ENCODE measurements at regions of chr13 and their contacts with region 1.

Region 1: DNA sequence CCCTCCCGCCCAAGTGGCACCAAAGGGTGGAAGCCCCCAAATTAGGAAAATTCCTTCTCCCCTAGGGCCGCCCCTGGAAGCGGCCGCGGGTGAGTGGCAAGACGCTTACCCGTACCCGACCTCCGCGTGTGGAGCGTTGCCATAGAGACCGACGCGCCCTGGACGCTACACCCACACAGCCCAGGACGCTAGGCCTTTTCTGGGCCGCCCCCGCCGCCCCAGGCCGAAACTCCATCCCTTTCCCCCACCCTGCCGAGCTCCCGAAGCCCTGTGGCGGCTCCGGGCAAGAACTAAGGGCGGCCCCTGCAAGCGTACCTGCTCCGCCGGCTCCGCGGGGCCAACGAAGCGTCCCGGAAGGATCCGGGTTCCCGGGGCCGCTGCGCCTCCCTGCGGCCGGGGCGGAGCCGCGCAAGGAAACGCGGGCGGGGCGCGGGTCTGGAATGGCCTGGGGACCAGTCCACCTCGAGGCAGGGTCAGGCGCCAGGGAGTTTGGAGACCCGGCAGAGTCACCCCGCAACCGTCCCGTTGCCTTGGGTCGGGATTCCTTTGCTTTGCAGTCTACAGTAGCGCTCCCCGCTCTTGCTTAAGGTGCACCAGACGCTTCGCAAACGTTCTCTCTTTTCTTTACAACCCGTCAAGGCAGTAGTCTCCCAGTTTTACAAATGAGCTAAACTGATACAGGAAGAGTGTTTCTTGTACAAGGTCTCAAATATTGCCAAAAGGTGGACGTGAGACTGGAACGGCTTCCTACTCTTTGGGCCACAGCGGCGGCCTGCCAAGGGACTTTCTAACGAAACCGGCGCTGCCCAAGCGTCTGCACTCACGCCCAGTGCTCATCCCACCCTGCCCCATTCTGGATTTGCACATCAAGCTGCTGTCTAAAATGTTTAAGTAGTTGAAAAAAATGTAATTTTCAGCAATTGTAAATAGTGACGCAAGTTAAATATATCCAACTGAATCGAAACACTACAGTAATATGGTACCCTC is at the start of gene NEK5:
- DNase-seq: peak; percentile 14 to 83 (median 67)

Region 2: GRCh38 chr13:51380269-51380668 is 748.7 kb before region 1 on chr13:
- intact Hi-C with region 1: no loop called
- DNase-seq: no peak

Region 3: DNA sequence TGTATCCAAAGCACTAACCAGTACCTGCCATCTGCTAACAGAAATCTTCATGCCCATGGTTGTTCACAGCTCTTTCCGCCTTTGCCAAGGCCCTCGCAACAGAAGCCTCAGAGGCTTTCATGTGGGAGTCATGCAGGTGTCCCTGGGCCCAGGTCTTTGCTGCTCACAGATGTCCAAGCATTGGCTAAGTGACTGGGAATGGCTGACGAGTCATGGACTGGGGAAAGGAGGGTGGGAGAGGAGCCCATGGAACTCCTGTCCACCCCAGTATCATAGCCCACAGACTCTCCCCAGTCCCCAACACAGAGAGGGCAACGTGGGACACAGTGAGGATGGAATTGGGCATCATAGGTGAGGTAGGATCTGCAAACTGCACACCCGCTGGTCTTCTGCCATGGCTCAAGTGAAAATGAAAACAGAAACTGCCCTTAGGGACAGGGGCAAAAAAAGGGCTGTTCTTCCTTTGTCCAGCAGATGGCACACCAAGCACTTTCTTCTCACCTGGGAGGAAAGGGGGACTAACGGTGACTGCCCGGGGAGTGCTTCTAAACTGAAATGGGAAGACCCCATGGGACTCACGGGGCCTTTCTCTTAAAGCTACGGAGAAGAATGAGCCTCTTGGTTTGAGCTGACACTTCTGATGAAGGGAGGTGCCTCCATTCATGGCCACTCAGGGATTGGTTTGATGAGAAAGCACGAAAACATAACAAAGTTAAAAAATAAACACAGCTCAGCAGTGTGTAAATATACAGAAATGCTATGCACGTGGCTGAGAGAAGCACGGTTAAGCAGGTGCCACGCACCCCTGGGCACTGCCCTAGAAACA is 314.0 kb before region 1 on chr13:
- intact Hi-C with region 1: loop called (anchors 10 kb)
- DNase-seq: peak in 36 of 42 donors; percentile 9 to 86 (median 62)

Region 4: GRCh38 chr13:51995677-51996551 is 133.1 kb before region 1 on chr13:
- intact Hi-C with region 1: loop called (anchors 5 kb)
- DNase-seq: peak in 1 of 42 donors; percentile 14

Region 5: DNA sequence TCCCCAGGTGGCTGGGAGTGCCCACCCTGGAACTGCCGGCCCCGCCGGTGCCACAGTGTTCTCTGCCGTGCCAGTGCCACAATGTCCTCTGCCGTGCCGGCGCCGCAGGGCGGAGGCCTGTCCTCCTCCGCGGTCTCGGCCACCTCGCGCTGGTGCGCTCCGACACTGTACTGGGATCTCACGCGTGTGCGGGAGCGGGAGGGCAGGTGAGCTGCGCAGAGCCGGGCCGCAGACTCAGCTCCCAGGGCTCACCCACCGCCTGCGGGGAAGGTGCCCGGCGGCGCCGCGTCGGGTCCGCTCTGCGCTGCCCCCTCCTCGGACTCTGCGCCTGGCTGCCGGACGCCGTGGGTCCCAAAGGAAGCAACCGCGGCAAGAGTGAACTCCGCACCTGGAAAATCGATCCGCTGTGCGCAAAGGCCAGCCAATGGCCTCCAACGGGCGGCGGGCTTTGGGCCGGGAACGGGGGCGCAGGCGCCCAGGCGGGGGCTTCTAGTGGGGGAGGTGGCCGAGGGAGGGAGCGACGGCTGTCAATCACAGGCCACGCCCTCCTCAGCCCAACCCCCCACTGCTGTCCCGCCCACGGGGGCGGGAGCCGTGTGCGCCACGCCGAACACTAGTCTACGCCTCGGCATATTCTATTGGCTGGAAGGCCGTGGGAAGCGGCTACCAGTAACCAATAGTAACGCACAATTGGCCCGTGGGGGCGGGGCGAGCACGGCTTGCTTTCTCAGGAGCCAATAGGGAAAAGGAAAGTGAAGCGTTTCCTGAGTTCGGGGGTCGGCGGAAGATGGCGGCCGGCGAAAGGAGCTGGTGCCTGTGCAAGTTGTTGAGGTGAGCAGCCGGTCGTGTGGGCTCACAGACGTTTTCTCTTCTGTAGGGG is 117.1 kb before region 1 on chr13 and contains the start of gene ALG11:
- intact Hi-C with region 1: loop called (anchors 5 kb)
- DNase-seq: peak; percentile 98 to 100 (median 99)

Region 6: DNA sequence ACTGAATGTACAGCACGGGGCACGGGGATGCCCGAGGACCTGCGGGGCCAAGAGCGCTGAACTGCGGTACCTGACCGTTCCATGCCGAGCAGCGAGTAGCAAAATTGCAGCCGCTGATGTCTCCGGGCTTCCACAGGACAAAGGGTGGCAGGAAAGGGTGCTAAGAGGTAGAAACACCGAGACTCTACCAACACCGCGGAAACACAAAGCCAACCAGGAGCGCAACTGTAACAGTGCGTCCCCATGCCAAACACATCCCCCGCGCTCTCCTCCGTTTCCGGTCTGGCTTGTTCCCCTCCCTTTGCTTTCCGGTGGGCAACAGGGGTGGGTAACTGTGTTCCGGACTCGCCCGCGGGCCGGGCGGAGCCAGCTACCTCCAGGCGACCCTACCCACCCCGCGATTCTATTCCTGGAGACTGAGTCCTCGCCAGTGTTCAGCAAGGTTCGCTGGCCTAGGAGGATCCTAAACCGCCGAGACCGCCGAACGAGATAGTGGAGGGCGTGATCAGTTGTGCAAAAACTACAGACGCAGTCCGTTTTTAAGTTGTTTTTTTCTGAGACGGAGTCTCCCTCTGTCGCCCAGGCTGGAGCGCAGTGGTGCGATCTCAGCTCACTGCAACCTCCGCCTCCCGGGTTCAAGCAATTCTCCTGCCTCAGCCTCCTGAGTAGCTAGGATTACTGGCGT is 65.3 kb after region 1 on chr13:
- intact Hi-C with region 1: loop called (anchors 5 kb)
- DNase-seq: peak; percentile 78 to 95 (median 90)